ENCODE measurements at regions of chr19 and their contacts with region 1.

Region 1: GRCh38 chr19:45469132-45469944 is 1.5 kb downstream of the FOSB start:
- DNase-seq: peak; percentile 94
- ATAC-seq: peak; percentile 75
- H3K4me3 Mint-ChIP-seq: peak overlapping the region; percentile 87
- H3K27ac Mint-ChIP-seq: peak overlapping the region; percentile 96
- H3K4me1 Mint-ChIP-seq: peaks cover 32% of the 10 kb centered on the region
- H3K27me3 Mint-ChIP-seq: peaks cover 81% of the 10 kb centered on the region
- CTCF ChIP-seq: no peak

Region 2: GRCh38 chr19:45413497-45413896 is 55.8 kb before region 1 on chr19:
- CTCF ChIA-PET with region 1: no interaction called
- POLR2A ChIA-PET with region 1: no interaction called
- DNase-seq: no peak
- ATAC-seq: no peak
- H3K4me3 Mint-ChIP-seq: no peak overlapping the region
- H3K27ac Mint-ChIP-seq: no peak overlapping the region
- H3K4me1 Mint-ChIP-seq: no peaks in the 10 kb centered on the region
- H3K27me3 Mint-ChIP-seq: no peaks in the 10 kb centered on the region
- CTCF ChIP-seq: no peak

Region 3: DNA sequence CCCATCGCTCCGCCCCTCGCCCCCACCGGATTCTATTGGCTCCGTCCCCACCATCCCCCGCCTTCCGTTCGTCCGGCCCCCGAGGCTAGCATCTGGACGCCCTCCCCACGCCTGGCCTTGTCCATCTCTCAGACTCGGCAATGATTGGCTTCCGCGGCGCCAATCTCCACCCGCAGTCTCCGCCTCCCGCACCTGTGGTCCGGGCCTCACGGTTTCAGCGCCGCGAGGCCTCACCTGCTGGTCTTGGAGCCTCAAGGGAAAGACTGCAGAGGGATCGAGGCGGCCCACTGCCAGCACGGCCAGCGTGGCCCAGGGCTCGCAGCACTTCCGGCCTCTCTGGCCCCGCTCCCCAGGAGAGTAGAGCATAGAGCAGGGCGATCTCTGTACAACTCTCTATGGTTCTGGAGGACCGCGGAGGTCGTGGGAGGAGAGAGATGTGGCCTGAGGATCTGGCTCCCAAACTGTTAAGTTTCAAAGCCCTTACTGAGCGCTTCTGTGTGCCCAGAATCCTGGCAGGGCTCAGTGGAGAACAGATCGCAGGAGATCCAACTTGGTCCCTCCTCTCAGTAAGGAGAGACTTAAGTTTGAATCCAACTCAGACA is 45.6 kb before region 1 on chr19 and contains the start of gene ERCC1:
- CTCF ChIA-PET with region 1: interaction called, 11 read pairs
- POLR2A ChIA-PET with region 1: no interaction called
- DNase-seq: peak; percentile 100
- ATAC-seq: peak; percentile 90
- H3K4me3 Mint-ChIP-seq: peak within 1 kb of the TSS; percentile 93
- H3K27ac Mint-ChIP-seq: peak within 1 kb of the TSS; percentile 99
- H3K4me1 Mint-ChIP-seq: peaks cover 21% of the 10 kb centered on the region
- H3K27me3 Mint-ChIP-seq: no peaks in the 10 kb centered on the region
- CTCF ChIP-seq: no peak
- total RNA-seq, gene ERCC1: 43.7 to 60.6 TPM (median 60.1 TPM) in 3 replicates

Region 4: DNA sequence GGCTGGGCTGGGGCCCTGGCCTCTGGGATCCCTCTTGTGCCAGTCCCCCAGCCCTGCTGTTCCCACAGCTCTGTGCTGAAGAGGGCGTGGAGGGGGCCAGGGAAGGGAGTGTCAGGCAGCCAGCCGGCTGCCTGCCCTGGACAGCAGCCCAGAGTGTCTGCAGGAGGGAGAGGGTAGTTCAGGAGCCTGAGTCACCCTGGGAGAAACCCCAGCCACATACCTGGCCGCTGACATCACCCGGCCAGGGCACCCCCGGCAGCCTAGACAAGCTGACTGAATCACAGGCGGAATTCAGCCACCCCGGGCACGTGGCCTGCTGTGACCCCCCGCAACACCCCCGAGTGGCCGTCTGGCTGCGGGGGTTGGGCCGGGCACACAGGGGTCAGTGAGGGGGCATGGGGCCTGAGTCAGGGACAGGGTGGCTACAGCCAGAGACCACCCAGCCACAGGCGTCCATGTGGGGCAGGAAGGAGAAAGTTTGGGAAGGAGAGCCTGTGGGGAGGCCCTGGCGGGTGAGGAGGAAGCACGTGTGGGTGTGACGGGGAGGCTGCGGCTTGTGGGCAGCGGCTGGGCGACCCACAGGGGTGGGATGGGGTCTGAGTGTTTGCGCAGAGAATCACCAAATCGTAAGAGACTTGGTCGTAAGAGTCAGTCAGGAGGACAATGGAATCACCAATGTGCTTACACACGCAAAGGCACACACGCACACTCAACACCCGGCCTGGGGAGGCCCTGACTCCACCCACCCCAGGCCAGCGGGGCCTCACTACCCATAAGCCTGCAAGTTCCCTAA is 13.4 kb before region 1 on chr19:
- CTCF ChIA-PET with region 1: interaction called, 17 read pairs
- POLR2A ChIA-PET with region 1: interaction called, 7 read pairs
- DNase-seq: peak; percentile 78
- ATAC-seq: peak; percentile 93
- H3K4me3 Mint-ChIP-seq: no peak overlapping the region
- H3K27ac Mint-ChIP-seq: peak overlapping the region; percentile 78
- H3K4me1 Mint-ChIP-seq: peaks cover 14% of the 10 kb centered on the region
- H3K27me3 Mint-ChIP-seq: peaks cover 37% of the 10 kb centered on the region
- CTCF ChIP-seq: no peak

Region 5: GRCh38 chr19:45517641-45518468 is 48.5 kb after region 1 on chr19:
- CTCF ChIA-PET with region 1: no interaction called
- POLR2A ChIA-PET with region 1: no interaction called
- DNase-seq: no peak
- ATAC-seq: no peak
- H3K4me3 Mint-ChIP-seq: no peak overlapping the region
- H3K27ac Mint-ChIP-seq: no peak overlapping the region; the same call in 1 of the 2 replicates
- H3K4me1 Mint-ChIP-seq: peaks cover 9% of the 10 kb centered on the region
- H3K27me3 Mint-ChIP-seq: no peaks in the 10 kb centered on the region
- CTCF ChIP-seq: no peak

Region 6: DNA sequence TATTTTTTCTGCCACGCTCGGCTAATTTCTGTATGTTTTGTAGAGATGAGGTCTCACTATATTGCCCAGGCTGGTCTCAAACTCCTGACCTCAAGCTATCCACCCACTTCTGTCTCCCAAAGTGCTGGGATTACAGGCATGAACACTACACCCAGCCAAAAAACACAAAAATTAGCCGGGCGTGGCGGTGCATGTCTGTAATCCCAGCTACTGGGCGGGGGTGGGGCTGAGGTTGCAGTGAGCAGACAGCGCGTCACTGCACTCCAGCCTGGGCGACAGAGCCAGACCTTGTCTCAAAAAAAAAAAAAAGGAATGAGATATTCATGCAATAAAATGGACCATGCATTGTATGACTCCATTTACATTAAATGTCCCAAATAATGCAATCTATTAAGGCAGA is 70.1 kb after region 1 on chr19:
- CTCF ChIA-PET with region 1: no interaction called
- POLR2A ChIA-PET with region 1: no interaction called
- DNase-seq: no peak
- ATAC-seq: no peak
- H3K4me3 Mint-ChIP-seq: no peak overlapping the region
- H3K27ac Mint-ChIP-seq: no peak overlapping the region
- H3K4me1 Mint-ChIP-seq: no peaks in the 10 kb centered on the region
- H3K27me3 Mint-ChIP-seq: peaks cover 10% of the 10 kb centered on the region
- CTCF ChIP-seq: no peak